Prostate gland (tissue), 2 donors: ENCODE measurements at regions of chr6 and their contacts with region 1.

Region 1: DNA sequence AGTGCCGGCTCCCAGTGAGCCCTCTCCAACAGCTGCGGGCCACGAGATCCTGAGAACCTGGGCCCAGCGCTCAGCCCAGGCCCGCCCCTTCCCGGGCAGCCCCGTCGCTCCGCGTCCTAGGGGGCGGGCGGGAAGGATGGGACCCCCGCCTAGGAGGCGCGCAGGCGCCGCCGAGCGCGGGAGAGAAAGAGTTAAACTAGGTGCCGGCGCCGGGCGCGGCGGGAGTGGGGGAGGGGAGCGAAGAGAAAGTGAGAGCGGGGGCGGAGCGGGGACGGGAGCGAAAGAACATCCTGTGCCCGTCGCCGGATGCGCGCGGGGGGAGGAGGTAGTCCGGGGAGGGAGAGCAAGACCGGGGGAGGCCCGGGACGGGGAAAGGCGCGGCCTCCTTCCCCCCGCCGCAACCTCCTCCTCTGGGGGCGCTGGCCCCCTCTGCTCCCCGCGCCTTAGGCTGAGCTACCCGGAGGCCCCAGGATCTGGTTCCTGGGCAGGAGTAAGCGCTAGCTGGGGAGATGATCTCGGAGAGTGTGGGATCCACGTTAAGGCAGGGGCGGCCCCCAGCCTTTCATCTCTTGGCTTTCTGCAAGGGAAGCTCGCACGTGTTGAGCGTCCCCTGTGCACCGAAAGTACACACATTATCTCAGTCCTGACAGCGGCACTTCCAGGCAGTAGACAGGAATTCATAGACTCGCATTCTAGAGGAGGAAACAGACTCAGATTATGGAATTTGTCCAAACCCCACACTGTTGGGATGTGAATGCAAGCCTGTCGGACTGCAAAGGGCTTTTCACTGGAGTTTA is 4.9 kb upstream of the ARMC12 start:
- DNase-seq: peak; percentile 98
- H3K4me3 ChIP-seq: peak overlapping the region; percentile 46 to 50
- H3K27ac ChIP-seq: peak overlapping the region; percentile 99 to 100
- H3K4me1 ChIP-seq: peaks cover 58% of the 10 kb centered on the region
- H3K27me3 ChIP-seq: no peaks in the 10 kb centered on the region
- CTCF ChIP-seq: peak in 1 of 4 experiments; percentile 10
- POLR2A ChIP-seq: peak; percentile 59

Region 2: DNA sequence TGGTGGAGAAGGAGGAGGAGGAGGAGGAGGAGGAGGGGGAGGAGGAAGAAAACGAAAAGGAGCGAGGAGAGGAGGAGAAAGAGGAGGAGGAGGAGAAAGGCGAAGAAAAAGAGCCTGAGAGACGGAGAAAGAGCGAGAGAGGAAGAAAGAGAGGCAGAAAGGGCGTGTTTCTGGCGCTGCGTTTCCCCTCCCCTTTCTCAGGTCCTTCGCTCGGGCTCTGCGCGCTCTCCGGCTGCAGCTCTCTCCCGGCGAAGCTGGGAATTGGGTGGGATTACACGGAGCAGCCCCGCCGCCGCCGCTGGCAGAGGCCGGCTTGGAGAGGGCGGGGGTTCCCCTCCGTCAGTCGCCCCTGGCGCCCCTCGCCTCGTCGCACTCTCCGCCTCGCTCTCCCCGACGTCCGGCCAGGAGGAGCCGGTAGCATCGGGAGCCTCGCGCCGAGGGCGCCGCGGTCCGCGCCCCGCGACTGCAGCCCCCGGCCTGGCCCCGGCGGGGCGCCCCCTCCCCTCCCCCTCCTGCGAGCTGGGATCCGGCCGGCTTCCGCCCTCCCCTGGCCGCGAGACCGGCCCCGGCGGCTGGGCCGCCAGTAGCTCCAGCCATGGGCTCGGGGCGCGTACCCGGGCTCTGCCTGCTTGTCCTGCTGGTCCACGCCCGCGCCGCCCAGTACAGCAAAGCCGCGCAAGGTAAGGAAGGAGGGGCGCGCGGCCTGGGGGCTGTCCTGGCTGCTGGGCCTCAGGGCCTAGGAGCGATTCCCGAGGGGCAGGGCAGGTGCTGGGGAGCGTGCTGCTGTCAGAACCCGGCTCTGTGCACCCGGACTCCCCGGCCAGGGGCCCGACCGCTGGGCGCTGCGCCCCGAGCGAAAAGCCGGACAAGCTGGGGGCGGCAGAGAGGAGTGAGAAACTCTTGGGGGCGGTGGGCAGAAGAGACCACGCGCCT is 517.8 kb before region 1 on chr6 and contains the start of gene SCUBE3:
- intact Hi-C with region 1: no loop called
- DNase-seq: no peak
- H3K4me3 ChIP-seq: peak within 1 kb of the TSS; percentile 39 to 50
- H3K27ac ChIP-seq: peak within 1 kb of the TSS in 1 of 2 donors; percentile 43
- H3K4me1 ChIP-seq: no peaks in the 10 kb centered on the region
- H3K27me3 ChIP-seq: no peaks in the 10 kb centered on the region
- CTCF ChIP-seq: no peak
- POLR2A ChIP-seq: no peak
- total RNA-seq, gene SCUBE3: 2.0 to 3.4 TPM

Region 3: DNA sequence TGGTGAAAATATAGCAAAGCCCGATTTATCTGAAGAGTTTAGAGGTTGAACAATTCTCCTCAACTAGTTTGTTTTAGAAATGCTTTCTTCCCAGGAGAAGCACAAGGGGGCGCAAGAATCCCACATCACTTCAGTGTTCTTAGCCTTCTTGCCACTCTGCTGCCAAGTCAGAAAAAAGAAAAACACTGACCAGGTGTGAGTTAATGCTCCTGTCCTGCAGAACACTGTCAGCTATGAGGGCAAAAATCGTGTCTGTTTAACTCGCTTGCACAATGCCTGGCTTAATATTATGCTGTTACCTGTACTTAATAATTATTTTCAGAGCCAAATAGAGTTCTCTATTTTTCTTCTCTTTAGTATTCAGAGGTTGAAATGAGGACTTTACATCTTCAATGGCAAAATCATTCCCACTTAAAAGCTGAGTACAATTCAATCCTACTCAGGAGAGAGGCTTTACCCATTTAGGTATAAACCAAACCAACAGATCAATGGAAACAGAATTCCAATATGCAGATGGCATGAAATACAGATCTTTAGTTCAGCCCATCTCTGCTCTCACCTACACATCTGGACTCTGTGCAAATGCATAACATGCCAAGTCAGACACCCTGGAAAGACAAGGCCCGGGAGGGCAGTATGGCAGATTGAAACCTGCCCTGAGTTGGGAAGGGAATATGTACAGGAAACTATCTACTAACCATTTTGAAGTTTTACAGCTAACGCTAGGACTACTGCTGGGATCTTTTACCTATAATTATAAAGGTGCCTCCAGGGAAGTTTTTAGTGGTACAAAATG is 147.8 kb before region 1 on chr6:
- intact Hi-C with region 1: loop called (anchors 1 kb)
- DNase-seq: peak; percentile 81
- H3K4me3 ChIP-seq: no peak overlapping the region
- H3K27ac ChIP-seq: peak overlapping the region; percentile 70 to 84
- H3K4me1 ChIP-seq: peaks cover 12% of the 10 kb centered on the region
- H3K27me3 ChIP-seq: no peaks in the 10 kb centered on the region
- CTCF ChIP-seq: peak; percentile 59 to 97 (median 87)
- POLR2A ChIP-seq: no peak

Region 4: DNA sequence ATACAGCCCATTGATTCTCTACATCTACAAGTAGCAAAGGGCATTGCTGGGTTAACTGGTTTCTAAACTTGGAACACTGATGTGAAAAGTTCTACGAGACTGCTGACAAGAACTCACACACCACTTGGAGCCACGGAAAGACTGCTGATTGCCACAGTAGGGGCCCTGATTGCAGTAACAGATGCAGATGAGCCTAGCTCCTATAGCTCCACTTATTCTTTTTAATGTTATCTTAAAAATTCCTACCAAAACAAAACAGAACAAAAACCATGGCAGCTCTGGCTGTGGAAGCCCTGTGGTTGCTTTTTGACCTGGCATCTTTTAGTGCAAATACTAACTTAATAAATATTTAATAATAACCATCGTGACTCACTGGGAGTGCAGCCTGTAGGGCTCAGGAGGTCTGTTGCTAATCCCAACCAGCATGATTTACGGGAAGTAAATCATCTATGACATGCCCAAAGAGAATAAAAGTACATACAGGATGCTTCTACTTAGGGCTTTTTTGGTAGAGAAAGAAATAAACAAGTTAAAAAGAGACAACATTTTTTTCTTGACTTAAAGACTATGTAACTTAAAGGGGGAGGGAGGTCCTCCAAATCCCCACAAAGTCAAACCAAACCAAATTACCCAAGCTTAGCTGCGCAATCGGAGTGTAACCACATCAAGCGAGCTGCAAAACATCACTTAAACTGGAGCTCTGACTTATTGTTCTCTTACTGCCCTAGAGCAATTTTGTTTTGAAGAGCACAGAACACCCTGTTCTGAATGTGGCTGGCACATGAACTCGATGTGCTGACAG is 130.4 kb before region 1 on chr6:
- intact Hi-C with region 1: loop called (anchors 2 kb)
- DNase-seq: peak; percentile 80
- H3K4me3 ChIP-seq: no peak overlapping the region
- H3K27ac ChIP-seq: peak overlapping the region; percentile 93 to 94
- H3K4me1 ChIP-seq: peaks cover 19% of the 10 kb centered on the region
- H3K27me3 ChIP-seq: no peaks in the 10 kb centered on the region
- CTCF ChIP-seq: peak in 1 of 4 experiments; percentile 9
- POLR2A ChIP-seq: no peak

Region 5: GRCh38 chr6:36187446-36187845 is 455.5 kb after region 1 on chr6:
- intact Hi-C with region 1: no loop called
- DNase-seq: no peak
- H3K4me3 ChIP-seq: no peak overlapping the region
- H3K27ac ChIP-seq: no peak overlapping the region
- H3K4me1 ChIP-seq: no peaks in the 10 kb centered on the region
- H3K27me3 ChIP-seq: no peaks in the 10 kb centered on the region
- CTCF ChIP-seq: no peak
- POLR2A ChIP-seq: no peak